PC-9 (cell line): ENCODE measurements at regions of chr4 and their contacts with region 1.

Region 1: GRCh38 chr4:140359562-140360427 is 13.7 kb upstream of the SCOC start:
- DNase-seq: peak; percentile 52 to 75
- H3K4me3 ChIP-seq: no peak overlapping the region
- H3K27ac ChIP-seq: no peak overlapping the region
- H3K4me1 ChIP-seq: no peaks in the 10 kb centered on the region
- H3K27me3 ChIP-seq: no peaks in the 10 kb centered on the region
- CTCF ChIP-seq: peak; percentile 94

Region 2: GRCh38 chr4:139603576-139604387 is 756.0 kb before region 1 on chr4:
- CTCF ChIA-PET with region 1: no interaction called
- POLR2A ChIA-PET with region 1: no interaction called
- intact Hi-C with region 1: loop called (anchors 1 kb)
- DNase-seq: peak; percentile 56 to 85
- H3K4me3 ChIP-seq: no peak overlapping the region
- H3K27ac ChIP-seq: no peak overlapping the region
- H3K4me1 ChIP-seq: peaks cover 50% of the 10 kb centered on the region
- H3K27me3 ChIP-seq: no peaks in the 10 kb centered on the region
- CTCF ChIP-seq: peak; percentile 80

Region 3: GRCh38 chr4:139734875-139735380 is 624.9 kb before region 1 on chr4:
- CTCF ChIA-PET with region 1: no interaction called
- POLR2A ChIA-PET with region 1: no interaction called
- intact Hi-C with region 1: loop called (anchors 10 kb)
- DNase-seq: peak in 1 of 2 experiments; percentile 35
- H3K4me3 ChIP-seq: no peak overlapping the region
- H3K27ac ChIP-seq: no peak overlapping the region
- H3K4me1 ChIP-seq: no peaks in the 10 kb centered on the region
- H3K27me3 ChIP-seq: no peaks in the 10 kb centered on the region
- CTCF ChIP-seq: no peak

Region 4: GRCh38 chr4:140252742-140253555 is 106.8 kb before region 1 on chr4:
- CTCF ChIA-PET with region 1: no interaction called
- POLR2A ChIA-PET with region 1: interaction called, 3 read pairs
- intact Hi-C with region 1: loop called (anchors 2 kb)
- DNase-seq: peak; percentile 40 to 76
- H3K4me3 ChIP-seq: peak overlapping the region; percentile 59
- H3K27ac ChIP-seq: peak overlapping the region; percentile 73
- H3K4me1 ChIP-seq: peaks cover 69% of the 10 kb centered on the region
- H3K27me3 ChIP-seq: no peaks in the 10 kb centered on the region
- CTCF ChIP-seq: peak; percentile 84

Region 5: GRCh38 chr4:140408974-140409373 is 49.2 kb after region 1 on chr4:
- CTCF ChIA-PET with region 1: no interaction called
- POLR2A ChIA-PET with region 1: no interaction called
- intact Hi-C with region 1: no loop called
- DNase-seq: no peak
- H3K4me3 ChIP-seq: no peak overlapping the region
- H3K27ac ChIP-seq: no peak overlapping the region
- H3K4me1 ChIP-seq: no peaks in the 10 kb centered on the region
- H3K27me3 ChIP-seq: no peaks in the 10 kb centered on the region
- CTCF ChIP-seq: no peak

Region 6: DNA sequence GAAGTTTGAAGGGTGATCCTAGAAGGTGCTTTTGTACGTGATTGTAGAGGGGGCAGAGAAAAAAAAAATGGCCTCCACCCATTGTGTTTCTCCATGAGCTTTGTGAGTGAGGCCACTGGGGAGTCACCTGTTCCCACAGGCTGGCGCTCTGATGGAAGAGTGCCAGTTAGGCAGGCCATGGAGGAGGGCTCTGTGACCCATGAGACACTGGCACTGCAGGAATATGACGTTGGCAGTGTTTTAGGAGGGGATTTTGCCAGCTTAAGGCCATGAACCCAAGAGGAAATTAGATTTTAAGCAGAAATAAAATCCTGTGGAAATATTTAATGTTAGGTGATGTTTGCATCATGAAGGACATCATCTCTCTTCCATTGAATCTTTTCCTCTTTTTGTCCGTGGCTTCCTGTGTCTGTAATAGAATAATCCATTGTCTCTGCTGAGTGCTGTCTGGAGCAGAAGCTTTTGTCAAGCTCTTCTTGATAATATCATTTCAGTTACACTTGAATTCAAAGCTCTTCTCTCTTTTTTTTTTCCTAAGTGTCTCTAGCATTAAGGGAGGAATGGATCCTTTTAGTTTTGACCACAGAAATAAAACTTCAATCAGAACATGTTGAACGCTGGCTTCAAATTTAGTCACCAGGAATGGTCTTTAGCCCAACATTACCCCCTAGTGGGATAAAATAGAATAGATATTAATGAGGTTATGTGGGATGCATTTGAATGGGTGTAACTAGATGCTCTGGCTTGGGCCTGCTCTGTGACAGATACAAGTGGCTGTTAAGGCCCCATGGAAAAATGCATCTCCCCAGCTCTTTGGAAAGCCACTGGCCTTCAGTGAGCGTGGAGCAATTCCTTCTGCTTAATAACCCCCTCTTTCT is 250.0 kb after region 1 on chr4:
- CTCF ChIA-PET with region 1: interaction called, 8 read pairs
- POLR2A ChIA-PET with region 1: no interaction called
- intact Hi-C with region 1: loop called (anchors 1 kb)
- DNase-seq: no peak
- H3K4me3 ChIP-seq: no peak overlapping the region
- H3K27ac ChIP-seq: no peak overlapping the region
- H3K4me1 ChIP-seq: no peaks in the 10 kb centered on the region; the same call in 1 of the 2 replicates
- H3K27me3 ChIP-seq: no peaks in the 10 kb centered on the region
- CTCF ChIP-seq: peak; percentile 68

Region 7: DNA sequence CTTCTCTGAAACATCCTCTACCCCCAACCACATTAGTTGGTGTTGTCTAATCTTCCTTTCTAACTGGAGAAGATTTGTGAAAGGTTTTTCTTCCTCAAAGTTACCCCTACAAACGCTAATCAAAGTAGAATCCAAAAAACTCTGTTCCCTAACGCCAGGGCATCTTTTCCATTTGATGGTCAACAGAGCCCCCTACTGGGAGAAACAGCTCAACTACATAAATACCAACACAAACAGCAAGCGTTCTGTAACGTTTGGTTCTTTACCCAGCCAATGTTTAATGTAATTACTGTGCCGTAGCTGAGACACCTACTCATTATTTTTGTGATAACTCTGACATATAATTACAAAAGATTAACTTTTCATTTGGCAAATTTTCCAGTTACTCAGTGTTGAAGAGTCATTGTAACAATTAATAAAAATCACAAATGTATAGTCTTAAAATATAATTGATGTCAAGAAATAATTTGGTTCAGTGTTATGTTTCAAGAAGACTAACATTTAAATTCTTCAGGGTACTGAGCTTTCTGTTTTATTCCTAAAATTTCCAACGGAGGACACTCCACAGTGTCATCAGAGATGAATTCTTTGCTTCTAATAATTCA is 491.3 kb after region 1 on chr4:
- CTCF ChIA-PET with region 1: interaction called, 11 read pairs
- POLR2A ChIA-PET with region 1: no interaction called
- intact Hi-C with region 1: loop called (anchors 1 kb)
- DNase-seq: peak; percentile 41 to 43
- H3K4me3 ChIP-seq: no peak overlapping the region
- H3K27ac ChIP-seq: no peak overlapping the region
- H3K4me1 ChIP-seq: peaks cover 2% of the 10 kb centered on the region
- H3K27me3 ChIP-seq: no peaks in the 10 kb centered on the region
- CTCF ChIP-seq: peak; percentile 84

Region 8: DNA sequence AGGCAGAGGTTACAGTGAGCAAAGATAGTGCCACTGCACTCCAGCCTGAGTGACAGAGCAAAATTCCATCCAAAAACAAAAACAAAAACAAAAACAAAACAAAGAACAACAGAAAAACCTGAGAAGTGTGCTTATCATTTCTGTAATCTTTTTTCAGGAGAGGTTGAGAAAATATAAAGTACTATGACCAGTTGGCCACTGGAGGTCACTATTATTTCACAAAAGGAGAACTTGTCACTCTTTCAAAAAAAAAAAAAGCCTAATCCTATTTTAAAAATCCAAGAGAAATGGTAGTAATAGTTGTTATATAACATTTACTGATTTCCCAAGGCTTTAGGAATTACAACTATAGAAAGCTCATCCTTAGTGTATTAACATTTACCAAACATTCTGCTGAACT is 798.4 kb after region 1 on chr4:
- CTCF ChIA-PET with region 1: interaction called, 9 read pairs
- POLR2A ChIA-PET with region 1: no interaction called
- intact Hi-C with region 1: loop called (anchors 10 kb)
- DNase-seq: no peak
- H3K4me3 ChIP-seq: no peak overlapping the region
- H3K27ac ChIP-seq: no peak overlapping the region
- H3K4me1 ChIP-seq: no peaks in the 10 kb centered on the region
- H3K27me3 ChIP-seq: no peaks in the 10 kb centered on the region
- CTCF ChIP-seq: peak; percentile 73